CD4-positive, alpha-beta T cell (primary cell): ENCODE measurements at regions of chr17 and their contacts with region 1.

Region 1: GRCh38 chr17:79082311-79083190 is 7.9 kb downstream of the ENGASE start:
- DNase-seq: peak in 13 of 14 experiments; percentile 18 to 75 (median 44)
- ATAC-seq: peak; percentile 60
- H3K4me3 ChIP-seq: no peak overlapping the region
- H3K4me3 Mint-ChIP-seq: no peak overlapping the region
- H3K27ac ChIP-seq: no peak overlapping the region
- H3K27ac Mint-ChIP-seq: no peak overlapping the region
- H3K4me1 ChIP-seq: peaks cover 10% of the 10 kb centered on the region
- H3K4me1 Mint-ChIP-seq: no peaks in the 10 kb centered on the region
- H3K27me3 ChIP-seq: no peaks in the 10 kb centered on the region
- H3K27me3 Mint-ChIP-seq: no peaks in the 10 kb centered on the region
- CTCF ChIP-seq: peak; percentile 77

Region 2: GRCh38 chr17:78933959-78934568 is 148.5 kb before region 1 on chr17:
- CTCF ChIA-PET with region 1: no interaction called
- POLR2A ChIA-PET with region 1: no interaction called
- intact Hi-C with region 1: no loop called
- DNase-seq: peak in 1 of 14 experiments; percentile 42
- ATAC-seq: no peak
- H3K4me3 ChIP-seq: no peak overlapping the region
- H3K4me3 Mint-ChIP-seq: no peak overlapping the region
- H3K27ac ChIP-seq: no peak overlapping the region
- H3K27ac Mint-ChIP-seq: no peak overlapping the region
- H3K4me1 ChIP-seq: peaks cover 17% of the 10 kb centered on the region
- H3K4me1 Mint-ChIP-seq: peaks cover 3% of the 10 kb centered on the region
- H3K27me3 ChIP-seq: no peaks in the 10 kb centered on the region
- H3K27me3 Mint-ChIP-seq: no peaks in the 10 kb centered on the region
- CTCF ChIP-seq: no peak

Region 3: DNA sequence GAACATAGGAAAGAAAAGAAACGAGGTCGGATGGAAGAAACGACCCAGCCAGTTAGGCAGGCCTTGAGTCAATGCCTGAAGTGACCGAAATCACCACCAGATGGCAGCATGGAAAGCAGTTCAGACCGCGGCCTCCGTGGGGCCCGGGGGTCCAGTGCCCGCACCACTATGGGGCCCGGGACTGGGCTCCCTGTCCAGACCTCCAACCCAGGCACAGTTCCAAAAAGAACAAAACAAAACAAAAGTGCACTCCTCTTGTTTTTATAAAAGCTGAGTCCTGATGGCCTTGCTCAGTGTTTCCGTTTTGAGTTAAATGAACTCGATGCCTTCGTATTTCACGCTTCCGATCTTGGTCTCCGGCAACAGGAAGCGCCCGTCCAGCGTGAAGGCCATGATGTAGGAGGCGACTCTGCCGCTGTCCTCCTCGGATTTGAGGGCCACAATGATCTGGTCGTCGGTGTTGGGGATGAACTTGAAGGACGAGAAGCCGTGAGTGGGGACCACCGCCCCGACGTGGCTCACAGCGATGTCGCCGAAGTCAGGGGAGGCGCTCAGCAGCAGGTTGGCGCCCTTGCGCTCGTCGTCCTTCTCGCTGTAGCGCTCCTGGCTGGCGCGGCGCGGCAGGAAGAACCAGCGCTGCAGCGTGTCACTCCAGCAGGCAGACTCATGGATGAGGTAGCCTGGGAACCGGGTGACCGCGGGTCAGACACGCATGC is 89.2 kb before region 1 on chr17:
- CTCF ChIA-PET with region 1: no interaction called
- POLR2A ChIA-PET with region 1: no interaction called
- intact Hi-C with region 1: loop called in 1 of 2 experiments (anchors 2 kb)
- DNase-seq: peak in 13 of 14 experiments; percentile 26 to 73 (median 43)
- ATAC-seq: peak; percentile 78
- H3K4me3 ChIP-seq: no peak overlapping the region
- H3K4me3 Mint-ChIP-seq: no peak overlapping the region
- H3K27ac ChIP-seq: no peak overlapping the region
- H3K27ac Mint-ChIP-seq: no peak overlapping the region
- H3K4me1 ChIP-seq: peaks cover 7% of the 10 kb centered on the region
- H3K4me1 Mint-ChIP-seq: peaks cover 8% of the 10 kb centered on the region
- H3K27me3 ChIP-seq: no peaks in the 10 kb centered on the region
- H3K27me3 Mint-ChIP-seq: no peaks in the 10 kb centered on the region
- CTCF ChIP-seq: peak; percentile 76

Region 4: GRCh38 chr17:79272666-79273219 is 190.2 kb after region 1 on chr17:
- CTCF ChIA-PET with region 1: no interaction called
- POLR2A ChIA-PET with region 1: no interaction called
- intact Hi-C with region 1: no loop called
- DNase-seq: no peak
- ATAC-seq: no peak
- H3K4me3 ChIP-seq: no peak overlapping the region
- H3K4me3 Mint-ChIP-seq: no peak overlapping the region
- H3K27ac ChIP-seq: no peak overlapping the region
- H3K27ac Mint-ChIP-seq: no peak overlapping the region
- H3K4me1 ChIP-seq: no peaks in the 10 kb centered on the region
- H3K4me1 Mint-ChIP-seq: no peaks in the 10 kb centered on the region
- H3K27me3 ChIP-seq: peaks cover 11 to 15% of the 10 kb centered on the region in 2 experiments
- H3K27me3 Mint-ChIP-seq: peaks cover 40% of the 10 kb centered on the region
- CTCF ChIP-seq: no peak